Caco-2 (cell line): ENCODE measurements at regions of chr2 and their contacts with region 1.

Region 1: GRCh38 chr2:11647834-11648600 is 22.0 kb downstream of the NTSR2 start:
- DNase-seq: peak in 1 of 2 experiments; percentile 22
- H3K4me3 ChIP-seq: no peak overlapping the region
- H3K4me3 Mint-ChIP-seq: no peak overlapping the region
- H3K27ac Mint-ChIP-seq: no peak overlapping the region
- H3K4me1 ChIP-seq: no peaks in the 10 kb centered on the region
- H3K4me1 Mint-ChIP-seq: no peaks in the 10 kb centered on the region
- H3K27me3 ChIP-seq: no peaks in the 10 kb centered on the region; the same call in 1 of the 2 replicates
- H3K27me3 Mint-ChIP-seq: peaks cover 16% of the 10 kb centered on the region
- CTCF ChIP-seq: peak in 1 of 2 experiments; percentile 58

Region 2: DNA sequence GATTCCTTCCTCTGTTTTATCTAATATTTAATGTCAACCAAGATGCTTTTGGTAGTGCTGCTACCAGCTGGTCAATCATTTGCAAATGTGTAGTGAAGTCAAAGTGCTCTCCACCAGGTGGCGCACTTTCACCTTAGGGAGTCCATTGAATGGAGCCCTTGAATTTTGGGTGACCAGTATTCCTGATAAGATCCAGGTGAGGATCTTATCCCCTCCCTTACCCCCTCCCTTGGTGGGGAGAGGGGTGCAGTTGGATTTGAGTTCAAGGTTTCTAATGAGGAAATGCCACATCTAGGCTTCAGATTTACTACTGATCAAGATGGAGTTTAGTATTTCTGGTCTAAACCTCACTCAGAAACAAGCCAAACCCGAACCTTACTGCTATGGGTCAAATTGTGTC is 170.0 kb before region 1 on chr2:
- CTCF ChIA-PET with region 1: no interaction called
- POLR2A ChIA-PET with region 1: no interaction called
- intact Hi-C with region 1: loop called (anchors 1 kb)
- DNase-seq: peak; percentile 85 to 86
- H3K4me3 ChIP-seq: no peak overlapping the region
- H3K4me3 Mint-ChIP-seq: no peak overlapping the region
- H3K27ac Mint-ChIP-seq: no peak overlapping the region
- H3K4me1 ChIP-seq: no peaks in the 10 kb centered on the region
- H3K4me1 Mint-ChIP-seq: no peaks in the 10 kb centered on the region
- H3K27me3 ChIP-seq: no peaks in the 10 kb centered on the region
- H3K27me3 Mint-ChIP-seq: peaks cover 6% of the 10 kb centered on the region
- CTCF ChIP-seq: peak; percentile 84 to 94

Region 3: GRCh38 chr2:11663427-11663826 is 15.4 kb after region 1 on chr2:
- CTCF ChIA-PET with region 1: no interaction called
- POLR2A ChIA-PET with region 1: no interaction called
- intact Hi-C with region 1: no loop called
- DNase-seq: no peak
- H3K4me3 ChIP-seq: no peak overlapping the region
- H3K4me3 Mint-ChIP-seq: no peak overlapping the region
- H3K27ac Mint-ChIP-seq: no peak overlapping the region
- H3K4me1 ChIP-seq: no peaks in the 10 kb centered on the region
- H3K4me1 Mint-ChIP-seq: no peaks in the 10 kb centered on the region
- H3K27me3 ChIP-seq: no peaks in the 10 kb centered on the region
- H3K27me3 Mint-ChIP-seq: no peaks in the 10 kb centered on the region
- CTCF ChIP-seq: no peak